Mammary epithelial cell (primary cell): ENCODE measurements at regions of chr7 and their contacts with region 1.

Region 1: DNA sequence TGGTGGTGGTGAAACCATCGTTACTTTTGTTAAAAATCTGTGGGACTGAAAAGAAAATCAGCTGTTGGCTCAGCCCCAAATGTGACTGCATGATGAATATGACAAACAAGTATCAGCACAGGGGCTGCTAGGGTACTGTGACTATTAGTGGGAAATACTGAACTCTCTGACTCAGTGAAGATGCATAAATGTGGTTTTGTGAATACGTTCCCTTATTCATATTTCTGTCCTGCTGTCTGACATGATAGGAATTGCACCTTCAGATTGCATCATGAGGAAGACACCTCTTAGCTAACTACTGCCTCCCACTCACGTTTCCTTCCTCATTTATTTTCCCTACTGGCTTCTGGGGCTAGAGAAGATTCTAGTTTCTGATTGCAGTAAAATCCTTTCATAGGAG is 1.4 kb downstream of the CLEC5A start:
- DNase-seq: peak; percentile 97
- H3K4me3 ChIP-seq: no peak overlapping the region
- H3K27ac ChIP-seq: peak overlapping the region; percentile 82
- H3K4me1 ChIP-seq: peaks cover 23% of the 10 kb centered on the region
- H3K27me3 ChIP-seq: no peaks in the 10 kb centered on the region
- CTCF ChIP-seq: no peak

Region 2: GRCh38 chr7:141915565-141915964 is 29.8 kb before region 1 on chr7:
- CTCF ChIA-PET with region 1: no interaction called
- dilution Hi-C with region 1: no loop called
- in situ Hi-C with region 1: no loop called
- intact Hi-C with region 1: loop called (anchors 1 kb)
- DNase-seq: peak; percentile 97
- H3K4me3 ChIP-seq: no peak overlapping the region
- H3K27ac ChIP-seq: peak overlapping the region; percentile 23
- H3K4me1 ChIP-seq: peaks cover 18% of the 10 kb centered on the region
- H3K27me3 ChIP-seq: no peaks in the 10 kb centered on the region
- CTCF ChIP-seq: no peak

Region 3: GRCh38 chr7:142012825-142013511 is 67.6 kb after region 1 on chr7:
- CTCF ChIA-PET with region 1: no interaction called
- dilution Hi-C with region 1: no loop called
- in situ Hi-C with region 1: no loop called
- intact Hi-C with region 1: no loop called
- DNase-seq: peak; percentile 47
- H3K4me3 ChIP-seq: no peak overlapping the region
- H3K27ac ChIP-seq: no peak overlapping the region
- H3K4me1 ChIP-seq: peaks cover 15% of the 10 kb centered on the region
- H3K27me3 ChIP-seq: no peaks in the 10 kb centered on the region
- CTCF ChIP-seq: peak; percentile 20 to 44